ENCODE measurements at regions of chr19 and their contacts with region 1.

Region 1: GRCh38 chr19:48993175-48994034 is at the starts of genes GYS1 and RUVBL2:
- DNase-seq: peak; percentile 96 to 100 (median 99)
- ATAC-seq: peak; percentile 95
- H3K4me3 ChIP-seq: peak within 1 kb of the TSS; percentile 70
- H3K4me3 Mint-ChIP-seq: peak within 1 kb of the TSS; percentile 95 to 100 (median 96)
- H3K27ac ChIP-seq: peak within 1 kb of the TSS; percentile 80
- H3K27ac Mint-ChIP-seq: peak within 1 kb of the TSS; percentile 89 to 99 (median 97)
- H3K4me1 ChIP-seq: peaks cover 23 to 24% of the 10 kb centered on the region in 2 donors
- H3K4me1 Mint-ChIP-seq: peaks cover 40 to 59% (median 46%) of the 10 kb centered on the region in 7 donors
- H3K27me3 ChIP-seq: no peaks in the 10 kb centered on the region
- H3K27me3 Mint-ChIP-seq: no peaks in the 10 kb centered on the region
- total RNA-seq, gene GYS1: 27.3 to 82.3 (median 50.7) TPM
- total RNA-seq, gene RUVBL2: 23.4 to 94.0 (median 24.1) TPM

Region 2: DNA sequence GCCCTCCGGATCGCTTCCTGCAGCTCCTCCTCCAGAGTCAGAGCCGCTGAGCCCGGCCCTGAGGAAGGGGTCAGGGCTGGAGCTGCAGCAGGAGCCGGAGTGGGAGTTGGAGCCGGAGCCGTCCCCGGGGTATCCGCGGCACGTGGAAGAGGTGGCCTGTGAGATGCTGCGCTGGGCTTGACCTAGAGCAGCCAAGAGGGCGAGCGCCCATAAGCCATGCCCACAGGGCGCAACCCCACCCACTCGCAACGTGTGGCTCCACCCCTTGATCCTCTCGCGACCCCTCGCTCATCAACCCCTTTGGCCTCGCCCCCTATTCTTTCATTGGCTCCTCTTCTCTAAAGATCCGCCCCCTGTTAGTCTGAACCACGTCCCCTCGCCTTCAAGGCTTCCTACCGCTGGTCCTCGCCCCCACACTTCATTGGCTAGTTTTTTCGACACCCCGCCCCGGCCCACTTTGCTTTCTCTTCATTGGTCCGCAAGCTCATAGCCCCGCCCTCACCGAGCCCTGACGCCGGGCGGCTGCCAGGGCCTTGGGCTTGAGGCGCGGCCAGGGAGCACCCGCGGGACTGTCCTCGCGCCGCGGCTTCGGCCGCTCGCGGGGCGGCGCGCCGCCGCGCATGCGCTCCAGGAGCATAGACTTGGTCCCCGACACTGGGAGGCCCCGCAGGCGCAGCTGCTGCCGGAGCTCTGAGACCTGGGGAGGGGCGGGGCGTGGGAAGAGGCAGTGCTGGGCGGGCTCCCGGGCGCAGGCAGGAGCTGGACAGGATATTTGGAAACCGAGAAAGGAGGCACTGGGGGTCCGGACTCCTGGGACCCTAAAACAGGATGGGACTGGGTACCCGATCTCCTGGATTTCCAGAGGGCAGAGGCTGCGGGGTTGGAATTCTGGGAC is 279.3 kb before region 1 on chr19:
- CTCF ChIA-PET with region 1: no interaction called
- POLR2A ChIA-PET with region 1: no interaction called
- intact Hi-C with region 1: loop called (anchors 1 kb)
- DNase-seq: peak; percentile 92 to 97 (median 97)
- ATAC-seq: peak; percentile 96
- H3K4me3 ChIP-seq: peak overlapping the region; percentile 95
- H3K4me3 Mint-ChIP-seq: peak overlapping the region; percentile 82 to 92 (median 88)
- H3K27ac ChIP-seq: peak overlapping the region; percentile 79
- H3K27ac Mint-ChIP-seq: peak overlapping the region; percentile 16 to 90 (median 81)
- H3K4me1 ChIP-seq: peaks cover 11 to 12% of the 10 kb centered on the region in 2 donors
- H3K4me1 Mint-ChIP-seq: peaks cover 9 to 24% (median 20%) of the 10 kb centered on the region in 7 donors
- H3K27me3 ChIP-seq: no peaks in the 10 kb centered on the region
- H3K27me3 Mint-ChIP-seq: no peaks in the 10 kb centered on the region

Region 3: DNA sequence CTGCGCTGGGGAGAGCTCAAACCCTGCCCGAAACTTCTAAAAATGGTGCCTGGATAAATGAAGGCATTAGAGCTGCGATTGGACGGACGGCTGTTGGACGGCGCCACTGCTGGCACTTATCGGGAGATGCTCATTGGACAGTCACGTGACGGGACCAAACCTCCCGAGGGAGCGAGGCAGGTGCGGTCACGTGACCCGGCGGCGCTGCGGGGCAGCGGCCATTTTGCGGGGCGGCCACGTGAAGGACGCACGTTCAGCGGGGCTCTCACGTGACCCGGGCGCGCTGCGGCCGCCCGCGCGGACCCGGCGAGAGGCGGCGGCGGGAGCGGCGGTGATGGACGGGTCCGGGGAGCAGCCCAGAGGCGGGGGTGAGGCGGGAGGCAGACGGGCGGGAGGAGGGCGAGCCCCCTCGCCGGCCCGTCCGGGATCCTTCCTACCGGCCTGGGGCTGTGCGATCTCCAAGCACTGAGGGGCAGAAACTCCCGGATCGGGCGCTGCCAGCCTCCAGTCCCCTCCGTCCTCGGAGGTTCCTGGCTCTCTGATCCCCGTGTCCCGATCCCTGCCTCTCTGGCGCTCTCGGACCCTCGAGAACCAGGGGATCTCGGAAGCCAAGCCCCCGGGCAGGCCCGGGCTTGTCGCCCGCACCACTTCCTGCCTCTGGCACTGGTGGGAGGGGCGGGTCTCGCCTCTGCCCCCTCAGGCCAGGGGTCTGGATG is 38.7 kb before region 1 on chr19 and contains the start of gene BAX:
- CTCF ChIA-PET with region 1: no interaction called
- POLR2A ChIA-PET with region 1: interaction called, 6 read pairs
- intact Hi-C with region 1: loop called in 1 of 2 experiments (anchors 2 kb)
- DNase-seq: peak; percentile 59 to 96 (median 71)
- ATAC-seq: peak; percentile 92
- H3K4me3 ChIP-seq: peak within 1 kb of the TSS; percentile 65
- H3K4me3 Mint-ChIP-seq: peak within 1 kb of the TSS; percentile 88 to 95 (median 94)
- H3K27ac ChIP-seq: peak within 1 kb of the TSS; percentile 85
- H3K27ac Mint-ChIP-seq: peak within 1 kb of the TSS; percentile 77 to 94 (median 91)
- H3K4me1 ChIP-seq: peaks cover 12 to 19% of the 10 kb centered on the region in 2 donors
- H3K4me1 Mint-ChIP-seq: peaks cover 26 to 46% (median 38%) of the 10 kb centered on the region in 7 donors
- H3K27me3 ChIP-seq: no peaks in the 10 kb centered on the region
- H3K27me3 Mint-ChIP-seq: peaks cover 0 to 2% (median 0%) of the 10 kb centered on the region in 5 donors
- total RNA-seq, gene BAX: 78.7 to 355 (median 122) TPM

Region 4: DNA sequence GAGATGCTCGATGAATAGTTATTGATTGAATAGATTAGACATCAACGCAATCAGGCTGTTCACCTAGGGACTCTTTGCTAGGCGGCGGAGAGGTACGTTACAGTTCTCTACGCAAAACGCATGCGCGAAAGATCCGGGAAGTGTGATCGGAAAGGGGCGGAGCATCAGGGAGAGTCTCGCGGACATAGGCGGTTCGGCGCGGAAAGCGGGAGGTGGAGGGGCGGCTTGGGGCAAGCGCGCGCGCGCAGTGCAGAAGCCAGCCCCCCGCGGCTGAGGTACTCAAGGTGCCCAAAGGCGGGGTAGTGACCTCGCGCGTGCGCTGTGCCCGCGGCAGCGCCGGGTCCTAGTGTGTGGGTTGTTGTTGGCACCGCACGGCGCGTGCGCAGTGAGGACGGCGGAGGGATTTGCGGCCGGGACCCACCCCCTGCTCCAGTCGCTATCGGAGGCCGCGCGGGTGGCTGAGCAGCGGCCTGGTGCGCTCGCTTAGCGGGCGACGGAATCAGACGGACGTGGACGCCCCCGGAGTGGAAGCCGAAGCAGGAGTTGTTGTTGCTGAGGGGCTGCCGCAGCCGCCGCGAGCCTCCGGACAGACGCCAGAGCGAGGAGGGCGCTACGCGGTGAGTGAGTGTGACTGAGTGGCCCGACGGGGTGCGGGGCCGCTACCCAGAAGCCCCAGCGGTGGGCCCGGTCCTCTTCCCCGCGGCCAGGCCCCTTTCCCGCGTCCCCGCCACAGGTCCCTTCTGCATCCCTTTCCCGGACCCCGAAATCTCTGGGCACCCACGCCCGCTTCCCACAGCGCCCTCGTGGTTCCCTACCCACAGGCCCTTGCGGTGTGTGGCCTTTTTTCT is 91.8 kb after region 1 on chr19 and contains the start of gene SNRNP70:
- CTCF ChIA-PET with region 1: no interaction called
- POLR2A ChIA-PET with region 1: no interaction called
- intact Hi-C with region 1: loop called in 1 of 2 experiments (anchors 1 kb)
- DNase-seq: peak; percentile 99 to 100 (median 100)
- ATAC-seq: peak; percentile 97
- H3K4me3 ChIP-seq: peak within 1 kb of the TSS; percentile 72
- H3K4me3 Mint-ChIP-seq: peak within 1 kb of the TSS; percentile 71 to 97 (median 94)
- H3K27ac ChIP-seq: peak within 1 kb of the TSS; percentile 94
- H3K27ac Mint-ChIP-seq: peak within 1 kb of the TSS; percentile 83 to 96 (median 88)
- H3K4me1 ChIP-seq: peaks cover 19% of the 10 kb centered on the region in 2 donors
- H3K4me1 Mint-ChIP-seq: peaks cover 18 to 49% (median 35%) of the 10 kb centered on the region in 7 donors
- H3K27me3 ChIP-seq: no peaks in the 10 kb centered on the region
- H3K27me3 Mint-ChIP-seq: peaks cover 0 to 5% (median 4%) of the 10 kb centered on the region in 5 donors
- total RNA-seq, gene SNRNP70: 243 to 837 (median 449) TPM

Region 5: DNA sequence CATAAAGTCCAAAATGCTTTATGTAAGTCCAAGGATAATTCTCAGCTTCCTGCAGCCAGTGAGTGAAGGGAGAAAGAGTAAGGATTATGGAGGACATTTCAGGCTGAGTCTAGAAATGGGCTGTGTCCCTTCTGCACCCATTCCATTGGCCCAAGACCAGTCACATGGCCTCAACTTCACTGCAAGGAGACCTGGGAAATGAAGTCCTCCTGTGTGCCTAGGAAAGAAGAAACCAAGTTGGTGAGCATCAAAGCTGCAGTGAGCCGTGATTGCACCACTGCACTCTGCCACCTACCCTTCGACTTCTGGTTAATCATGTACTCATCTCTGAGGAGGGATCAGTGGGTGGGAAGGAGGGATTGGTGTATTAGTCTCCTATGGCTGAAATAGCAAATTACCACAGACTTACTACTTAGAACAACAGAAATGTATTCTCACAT is 338.2 kb after region 1 on chr19:
- CTCF ChIA-PET with region 1: no interaction called
- POLR2A ChIA-PET with region 1: no interaction called
- intact Hi-C with region 1: loop called in 1 of 2 experiments (anchors 1 kb)
- DNase-seq: peak in 8 of 9 donors; percentile 48 to 76 (median 65)
- ATAC-seq: peak; percentile 83
- H3K4me3 ChIP-seq: no peak overlapping the region
- H3K4me3 Mint-ChIP-seq: peak overlapping the region in 9 of 10 donors; percentile 14 to 99 (median 49)
- H3K27ac ChIP-seq: peak overlapping the region; percentile 4
- H3K27ac Mint-ChIP-seq: peak overlapping the region; percentile 54 to 99 (median 87)
- H3K4me1 ChIP-seq: peaks cover 37 to 44% of the 10 kb centered on the region in 2 donors
- H3K4me1 Mint-ChIP-seq: peaks cover 54 to 80% (median 70%) of the 10 kb centered on the region in 7 donors
- H3K27me3 ChIP-seq: no peaks in the 10 kb centered on the region
- H3K27me3 Mint-ChIP-seq: no peaks in the 10 kb centered on the region

Region 6: GRCh38 chr19:49403404-49404187 is 410.2 kb after region 1 on chr19:
- CTCF ChIA-PET with region 1: no interaction called
- POLR2A ChIA-PET with region 1: no interaction called
- intact Hi-C with region 1: no loop called
- DNase-seq: no peak
- ATAC-seq: no peak
- H3K4me3 ChIP-seq: no peak overlapping the region
- H3K4me3 Mint-ChIP-seq: peak overlapping the region in 1 of 10 donors; percentile 16
- H3K27ac ChIP-seq: no peak overlapping the region
- H3K27ac Mint-ChIP-seq: peak overlapping the region in 3 of 9 donors; percentile 5 to 75 (median 36)
- H3K4me1 ChIP-seq: peaks cover 0 to 24% of the 10 kb centered on the region in 2 donors
- H3K4me1 Mint-ChIP-seq: peaks cover 14 to 55% (median 28%) of the 10 kb centered on the region in 7 donors
- H3K27me3 ChIP-seq: no peaks in the 10 kb centered on the region
- H3K27me3 Mint-ChIP-seq: peaks cover 0 to 4% (median 0%) of the 10 kb centered on the region in 5 donors

Region 7: GRCh38 chr19:49712397-49712859 is 719.0 kb after region 1 on chr19:
- CTCF ChIA-PET with region 1: no interaction called
- POLR2A ChIA-PET with region 1: no interaction called
- intact Hi-C with region 1: loop called in 1 of 2 experiments (anchors 1 kb)
- DNase-seq: no peak
- ATAC-seq: no peak
- H3K4me3 ChIP-seq: no peak overlapping the region
- H3K4me3 Mint-ChIP-seq: no peak overlapping the region
- H3K27ac ChIP-seq: no peak overlapping the region
- H3K27ac Mint-ChIP-seq: peak overlapping the region in 1 of 9 donors; percentile 83
- H3K4me1 ChIP-seq: peaks cover 0 to 2% of the 10 kb centered on the region in 2 donors
- H3K4me1 Mint-ChIP-seq: peaks cover 3 to 12% (median 4%) of the 10 kb centered on the region in 7 donors
- H3K27me3 ChIP-seq: no peaks in the 10 kb centered on the region
- H3K27me3 Mint-ChIP-seq: peaks cover 0 to 4% (median 0%) of the 10 kb centered on the region in 5 donors

Measured in naive thymus-derived CD4-positive, alpha-beta T cell (primary cell).